H1 (cell line): ENCODE measurements at regions of chr11 and their contacts with region 1.

Region 1: GRCh38 chr11:123511037-123511870 is 81.2 kb downstream of the GRAMD1B start:
- DNase-seq: peak; percentile 80 to 92
- H3K4me3 ChIP-seq: no peak overlapping the region
- H3K27ac ChIP-seq: no peak overlapping the region
- H3K4me1 ChIP-seq: peaks cover 3 to 16% (median 10%) of the 10 kb centered on the region in 4 experiments
- H3K27me3 ChIP-seq: no peaks in the 10 kb centered on the region
- CTCF ChIP-seq: peak; percentile 80 to 89 (median 84)
- EP300 ChIP-seq: no peak
- POLR2A ChIP-seq: no peak
- RAD21 ChIP-seq: peak; percentile 83 to 86

Region 2: DNA sequence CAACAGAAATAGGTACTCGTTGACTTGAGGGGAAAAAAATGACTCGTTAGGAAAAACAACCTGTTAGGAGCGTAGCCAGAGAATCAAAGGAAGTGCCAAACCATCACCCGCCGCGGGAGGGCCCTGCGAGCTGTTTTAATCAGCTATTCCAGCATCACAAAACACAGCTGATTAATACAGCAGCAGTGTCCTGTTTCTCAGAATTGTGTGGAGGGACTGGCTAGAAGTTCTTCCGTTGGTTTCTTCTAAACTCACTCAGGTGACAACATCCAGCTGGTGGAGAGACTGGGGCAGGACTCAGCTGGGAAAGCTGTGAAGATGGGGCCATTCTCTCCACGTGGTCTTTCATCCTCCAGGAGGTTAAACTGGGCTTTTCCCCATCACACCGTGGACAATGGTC is 477.4 kb before region 1 on chr11:
- CTCF ChIA-PET with region 1: no interaction called
- POLR2A ChIA-PET with region 1: no interaction called
- DNase-seq: no peak
- H3K4me3 ChIP-seq: no peak overlapping the region
- H3K27ac ChIP-seq: no peak overlapping the region
- H3K4me1 ChIP-seq: peaks cover 0 to 3% (median 1%) of the 10 kb centered on the region in 4 experiments; a peak in 4 of 7 replicates
- H3K27me3 ChIP-seq: no peaks in the 10 kb centered on the region
- CTCF ChIP-seq: no peak
- EP300 ChIP-seq: no peak
- POLR2A ChIP-seq: no peak
- RAD21 ChIP-seq: peak in 1 of 2 experiments; percentile 14; a peak in 1 of 4 replicates

Region 3: DNA sequence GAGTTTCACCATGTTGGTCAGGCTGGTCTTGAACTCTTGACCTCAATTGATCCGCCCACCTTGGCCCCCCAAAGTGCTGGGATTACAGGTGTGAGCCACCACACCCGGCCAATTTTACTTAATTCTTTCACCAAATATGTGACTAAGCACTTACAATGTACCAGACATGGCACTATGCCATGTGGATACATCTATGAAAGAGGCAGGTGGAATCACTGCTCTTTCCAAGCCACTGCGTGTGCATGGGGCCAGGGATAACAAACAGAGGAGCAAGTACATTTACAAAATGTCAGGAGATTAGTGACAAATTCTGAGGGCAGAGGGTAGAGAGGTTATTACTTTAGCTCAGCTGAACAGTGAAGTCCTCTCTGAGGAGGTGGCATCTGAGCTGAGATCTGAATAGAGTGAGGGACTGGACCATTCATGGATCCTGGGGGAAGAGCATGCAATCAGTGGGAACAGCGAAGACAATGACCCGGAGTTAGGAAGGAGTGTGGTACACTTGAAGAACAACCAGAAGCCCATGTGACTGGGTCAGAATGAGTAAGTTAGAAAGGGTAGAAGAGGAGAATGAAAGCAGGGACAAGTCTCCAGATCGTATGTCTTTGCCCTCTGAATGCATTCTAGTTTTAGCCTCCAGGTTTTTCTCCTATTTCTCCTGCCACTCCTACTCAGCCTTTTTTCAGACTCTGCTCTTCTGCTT is 119.5 kb before region 1 on chr11:
- CTCF ChIA-PET with region 1: no interaction called
- POLR2A ChIA-PET with region 1: no interaction called
- DNase-seq: no peak
- H3K4me3 ChIP-seq: no peak overlapping the region
- H3K27ac ChIP-seq: no peak overlapping the region
- H3K4me1 ChIP-seq: no peaks in the 10 kb centered on the region
- H3K27me3 ChIP-seq: no peaks in the 10 kb centered on the region; a peak in 1 of 7 replicates
- CTCF ChIP-seq: no peak
- EP300 ChIP-seq: no peak
- POLR2A ChIP-seq: no peak
- RAD21 ChIP-seq: no peak

Region 4: GRCh38 chr11:123525511-123525918 is 14.3 kb after region 1 on chr11:
- CTCF ChIA-PET with region 1: interaction called, 44 read pairs
- POLR2A ChIA-PET with region 1: no interaction called
- DNase-seq: no peak
- H3K4me3 ChIP-seq: no peak overlapping the region
- H3K27ac ChIP-seq: no peak overlapping the region
- H3K4me1 ChIP-seq: peaks cover 9 to 21% (median 14%) of the 10 kb centered on the region in 4 experiments; a peak in 6 of 7 replicates
- H3K27me3 ChIP-seq: no peaks in the 10 kb centered on the region
- CTCF ChIP-seq: no peak
- EP300 ChIP-seq: no peak
- POLR2A ChIP-seq: no peak
- RAD21 ChIP-seq: no peak

Region 5: DNA sequence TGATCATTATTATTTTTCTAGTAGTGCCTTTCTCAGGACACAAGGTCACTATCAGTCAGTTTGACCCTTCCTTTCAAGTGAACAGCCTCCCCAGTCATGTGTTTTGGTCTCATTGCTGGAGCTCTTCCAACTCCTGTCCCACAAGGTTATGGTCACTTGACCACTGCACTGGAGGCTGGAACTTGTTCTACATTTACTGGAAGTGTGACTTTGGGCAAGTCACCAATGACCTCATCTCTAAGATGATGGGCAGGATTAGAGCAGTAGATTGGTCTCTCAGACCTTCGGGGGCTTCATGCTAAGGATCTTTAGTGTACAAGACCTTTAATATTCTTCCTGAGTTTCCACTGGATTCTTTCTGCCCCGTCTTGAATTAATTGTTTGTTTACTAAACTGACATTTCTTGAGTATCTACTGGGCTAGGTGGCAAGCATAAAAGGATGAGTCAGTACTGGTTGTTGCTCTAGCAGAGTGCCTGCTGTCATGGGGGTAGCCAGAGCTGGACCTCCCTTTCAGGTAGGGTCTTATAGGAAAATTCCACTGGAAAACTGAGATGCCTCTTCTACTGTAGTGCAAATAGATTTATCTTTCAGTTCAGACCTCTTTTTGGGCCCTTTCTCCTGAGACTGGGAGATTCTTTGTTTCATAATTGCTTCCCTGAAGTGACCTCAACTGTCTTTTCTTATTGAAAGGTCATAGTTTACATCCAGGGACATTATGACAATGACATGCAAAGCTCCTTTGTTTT is 25.6 kb after region 1 on chr11:
- CTCF ChIA-PET with region 1: interaction called, 12 read pairs
- POLR2A ChIA-PET with region 1: interaction called, 3 read pairs
- DNase-seq: peak in 1 of 2 experiments; percentile 47
- H3K4me3 ChIP-seq: peak overlapping the region in 1 of 4 experiments; percentile 26; a peak in 1 of 8 replicates
- H3K27ac ChIP-seq: peak overlapping the region; percentile 68; the same call in 1 of the 2 replicates
- H3K4me1 ChIP-seq: peaks cover 8 to 21% (median 16%) of the 10 kb centered on the region in 4 experiments; a peak in 5 of 7 replicates
- H3K27me3 ChIP-seq: no peaks in the 10 kb centered on the region
- CTCF ChIP-seq: no peak
- EP300 ChIP-seq: no peak
- POLR2A ChIP-seq: no peak
- RAD21 ChIP-seq: no peak

Region 6: DNA sequence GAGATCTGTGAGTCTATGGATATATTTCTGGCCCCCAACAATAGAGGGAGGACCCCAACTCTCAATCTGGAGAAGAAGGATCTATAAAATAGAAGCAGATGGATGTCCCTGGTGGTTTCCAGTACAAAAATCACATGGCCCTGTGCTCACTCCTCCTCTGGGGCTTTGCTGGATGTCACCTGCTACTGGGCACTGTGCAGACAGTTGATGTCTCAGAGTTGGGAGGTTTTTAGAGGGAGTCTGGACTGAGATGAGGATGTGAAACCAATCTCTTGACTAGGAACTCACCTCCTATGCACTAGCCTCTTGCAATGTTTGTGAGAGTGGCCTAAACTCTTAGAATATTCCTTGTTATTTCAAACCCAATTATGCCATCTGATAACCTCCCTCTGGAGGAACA is 35.9 kb after region 1 on chr11:
- CTCF ChIA-PET with region 1: interaction called, 115 read pairs
- POLR2A ChIA-PET with region 1: no interaction called
- DNase-seq: no peak
- H3K4me3 ChIP-seq: no peak overlapping the region
- H3K27ac ChIP-seq: no peak overlapping the region
- H3K4me1 ChIP-seq: peaks cover 0 to 10% (median 5%) of the 10 kb centered on the region in 4 experiments; a peak in 4 of 7 replicates
- H3K27me3 ChIP-seq: no peaks in the 10 kb centered on the region
- CTCF ChIP-seq: no peak
- EP300 ChIP-seq: no peak
- POLR2A ChIP-seq: no peak
- RAD21 ChIP-seq: no peak

Region 7: GRCh38 chr11:123570939-123571580 is 59.8 kb after region 1 on chr11:
- CTCF ChIA-PET with region 1: interaction called, 67 read pairs
- POLR2A ChIA-PET with region 1: no interaction called
- DNase-seq: no peak
- H3K4me3 ChIP-seq: no peak overlapping the region
- H3K27ac ChIP-seq: no peak overlapping the region
- H3K4me1 ChIP-seq: peaks cover 0 to 13% (median 6%) of the 10 kb centered on the region in 4 experiments; a peak in 6 of 7 replicates
- H3K27me3 ChIP-seq: no peaks in the 10 kb centered on the region
- CTCF ChIP-seq: no peak
- EP300 ChIP-seq: no peak
- POLR2A ChIP-seq: no peak
- RAD21 ChIP-seq: no peak